ENCODE measurements at regions of chr12 and their contacts with region 1.

Region 1: DNA sequence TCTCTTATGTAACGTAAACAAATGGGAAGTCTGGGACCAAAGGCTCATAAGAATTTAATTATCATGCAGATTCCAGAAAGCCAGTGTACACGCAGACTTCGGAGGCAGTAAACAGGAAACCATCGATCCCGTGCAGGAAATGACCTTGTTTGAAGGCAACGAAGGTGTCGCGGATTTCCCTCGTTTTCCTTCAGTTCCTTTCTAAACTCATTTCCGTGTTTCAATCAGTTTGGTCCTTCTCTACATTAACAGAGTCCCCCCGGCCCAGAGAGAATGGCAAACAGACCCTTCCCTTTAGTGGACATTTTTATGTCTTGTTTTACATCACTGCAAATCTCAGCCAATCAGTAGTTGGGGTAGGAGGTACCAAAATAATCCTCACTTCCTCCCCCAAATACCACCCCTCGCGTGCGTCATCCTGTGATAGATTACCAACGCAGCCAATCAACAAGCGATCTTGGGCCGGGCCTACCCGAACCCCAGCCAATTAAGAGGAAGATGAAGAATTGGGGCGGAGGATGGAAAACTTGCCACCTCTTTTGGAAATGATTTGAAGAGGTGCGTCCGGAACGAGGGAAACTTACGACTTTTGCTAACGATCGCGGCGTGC is 6.1 kb upstream of the FOXJ2 start:
- DNase-seq: peak; percentile 98
- ATAC-seq: peak; percentile 97
- H3K4me3 Mint-ChIP-seq: peak overlapping the region; percentile 92
- H3K27ac Mint-ChIP-seq: peak overlapping the region; percentile 97
- H3K4me1 Mint-ChIP-seq: peaks cover 11% of the 10 kb centered on the region
- H3K27me3 Mint-ChIP-seq: no peaks in the 10 kb centered on the region

Region 2: GRCh38 chr12:6662906-6663742 is 1363.3 kb before region 1 on chr12 and contains the start of gene ING4:
- CTCF ChIA-PET with region 1: no interaction called
- POLR2A ChIA-PET with region 1: no interaction called
- intact Hi-C with region 1: loop called in 1 of 2 experiments (anchors 1 kb)
- DNase-seq: peak; percentile 98
- ATAC-seq: peak; percentile 98
- H3K4me3 Mint-ChIP-seq: peak within 1 kb of the TSS; percentile 84
- H3K27ac Mint-ChIP-seq: peak within 1 kb of the TSS; percentile 91
- H3K4me1 Mint-ChIP-seq: peaks cover 24% of the 10 kb centered on the region
- H3K27me3 Mint-ChIP-seq: no peaks in the 10 kb centered on the region
- total RNA-seq, gene ING4: 14.9 to 17.6 TPM

Region 3: DNA sequence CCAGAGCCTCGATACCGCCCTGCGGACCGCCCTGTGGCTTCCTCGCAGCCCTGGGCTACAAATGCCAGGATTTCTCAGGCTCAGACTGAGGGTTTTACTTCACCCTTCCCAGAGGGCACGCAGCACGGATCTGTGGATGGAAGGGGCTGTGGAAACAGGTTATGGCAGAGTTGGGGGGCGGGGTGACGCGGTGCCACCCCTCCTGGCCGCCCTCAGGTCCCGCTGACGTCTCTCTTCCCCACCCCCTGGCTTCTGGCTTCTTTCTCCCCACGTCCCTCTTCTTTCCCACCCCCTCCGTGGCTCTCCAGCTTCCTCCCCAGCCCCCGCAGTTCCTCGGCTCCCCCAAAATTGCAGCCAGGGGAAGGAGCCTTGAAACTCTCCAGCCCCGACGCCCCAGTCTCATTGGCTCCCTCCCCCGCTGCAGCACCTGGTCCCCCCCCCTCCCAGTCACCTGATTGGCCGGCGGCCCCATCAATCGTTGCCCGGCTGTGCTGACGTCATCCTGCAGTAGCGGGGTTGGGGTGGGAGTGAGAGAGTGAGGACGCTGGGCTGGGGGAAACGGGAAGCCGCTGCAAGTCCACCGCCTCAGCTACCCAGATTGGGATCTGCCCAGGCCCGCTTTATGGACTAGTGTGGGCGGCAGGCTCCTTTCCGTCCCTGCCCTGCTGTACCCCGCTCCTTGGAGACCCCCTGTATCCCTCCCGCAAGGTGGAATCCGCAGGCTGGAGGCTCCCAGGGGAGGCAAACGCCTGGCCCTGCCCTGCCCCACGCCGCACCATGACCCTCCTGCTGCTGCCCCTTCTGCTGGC is 896.3 kb before region 1 on chr12 and contains the start of gene CLSTN3:
- CTCF ChIA-PET with region 1: no interaction called
- POLR2A ChIA-PET with region 1: no interaction called
- intact Hi-C with region 1: loop called in 1 of 2 experiments (anchors 2 kb)
- DNase-seq: peak; percentile 93
- ATAC-seq: peak; percentile 89
- H3K4me3 Mint-ChIP-seq: peak within 1 kb of the TSS; percentile 80
- H3K27ac Mint-ChIP-seq: peak within 1 kb of the TSS; percentile 74
- H3K4me1 Mint-ChIP-seq: peaks cover 31% of the 10 kb centered on the region
- H3K27me3 Mint-ChIP-seq: no peaks in the 10 kb centered on the region
- total RNA-seq, gene CLSTN3: 28.2 to 37.9 TPM

Region 4: GRCh38 chr12:7512553-7512952 is 513.8 kb before region 1 on chr12:
- CTCF ChIA-PET with region 1: no interaction called
- POLR2A ChIA-PET with region 1: no interaction called
- intact Hi-C with region 1: no loop called
- DNase-seq: peak; percentile 5
- ATAC-seq: no peak
- H3K4me3 Mint-ChIP-seq: no peak overlapping the region
- H3K27ac Mint-ChIP-seq: no peak overlapping the region
- H3K4me1 Mint-ChIP-seq: no peaks in the 10 kb centered on the region
- H3K27me3 Mint-ChIP-seq: peaks cover 14% of the 10 kb centered on the region

Region 5: DNA sequence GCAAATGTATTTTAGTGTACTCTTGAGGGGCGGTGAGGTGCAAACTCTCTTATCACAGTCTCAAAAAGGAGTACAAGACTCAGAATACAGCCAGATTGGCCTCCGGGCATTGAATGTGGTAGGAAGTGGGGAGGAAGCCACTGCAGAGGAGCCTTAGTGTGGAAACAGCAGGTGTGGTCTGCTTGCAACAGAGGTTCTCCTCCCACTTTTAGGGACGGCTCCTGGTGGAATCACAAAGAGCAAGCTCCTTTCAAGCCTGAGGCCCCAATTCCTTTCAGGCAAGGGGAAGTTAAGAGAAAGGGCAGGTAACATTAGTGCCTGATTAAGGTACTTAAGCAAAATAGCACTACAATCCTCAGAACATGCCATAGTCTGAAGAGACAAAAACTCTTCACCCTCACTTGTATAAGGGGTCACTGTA is 66.7 kb before region 1 on chr12:
- CTCF ChIA-PET with region 1: interaction called, 7 read pairs
- POLR2A ChIA-PET with region 1: no interaction called
- intact Hi-C with region 1: loop called (anchors 1 to 2 kb)
- DNase-seq: peak; percentile 60
- ATAC-seq: peak; percentile 34
- H3K4me3 Mint-ChIP-seq: peak overlapping the region; percentile 86
- H3K27ac Mint-ChIP-seq: peak overlapping the region; percentile 94
- H3K4me1 Mint-ChIP-seq: peaks cover 30% of the 10 kb centered on the region
- H3K27me3 Mint-ChIP-seq: no peaks in the 10 kb centered on the region

Region 6: GRCh38 chr12:7970475-7971252 is 55.7 kb before region 1 on chr12:
- CTCF ChIA-PET with region 1: interaction called, 3 read pairs
- POLR2A ChIA-PET with region 1: interaction called, 7 read pairs
- intact Hi-C with region 1: loop called (anchors 1 to 2 kb)
- DNase-seq: peak; percentile 94
- ATAC-seq: peak; percentile 81
- H3K4me3 Mint-ChIP-seq: peak overlapping the region; percentile 80
- H3K27ac Mint-ChIP-seq: peak overlapping the region; percentile 99
- H3K4me1 Mint-ChIP-seq: peaks cover 31% of the 10 kb centered on the region
- H3K27me3 Mint-ChIP-seq: no peaks in the 10 kb centered on the region

Region 7: GRCh38 chr12:7989827-7990551 is 36.4 kb before region 1 on chr12:
- CTCF ChIA-PET with region 1: interaction called, 4 read pairs
- POLR2A ChIA-PET with region 1: no interaction called
- intact Hi-C with region 1: loop called in 1 of 2 experiments (anchors 1 kb)
- DNase-seq: peak; percentile 94
- ATAC-seq: peak; percentile 92
- H3K4me3 Mint-ChIP-seq: peak overlapping the region; percentile 62
- H3K27ac Mint-ChIP-seq: peak overlapping the region; percentile 90
- H3K4me1 Mint-ChIP-seq: peaks cover 42% of the 10 kb centered on the region
- H3K27me3 Mint-ChIP-seq: no peaks in the 10 kb centered on the region

Region 8: GRCh38 chr12:7995266-7995963 is 31.0 kb before region 1 on chr12:
- CTCF ChIA-PET with region 1: interaction called, 4 read pairs
- POLR2A ChIA-PET with region 1: no interaction called
- intact Hi-C with region 1: loop called in 1 of 2 experiments (anchors 1 kb)
- DNase-seq: peak; percentile 93
- ATAC-seq: peak; percentile 80
- H3K4me3 Mint-ChIP-seq: no peak overlapping the region
- H3K27ac Mint-ChIP-seq: no peak overlapping the region
- H3K4me1 Mint-ChIP-seq: peaks cover 23% of the 10 kb centered on the region
- H3K27me3 Mint-ChIP-seq: no peaks in the 10 kb centered on the region

Region 9: DNA sequence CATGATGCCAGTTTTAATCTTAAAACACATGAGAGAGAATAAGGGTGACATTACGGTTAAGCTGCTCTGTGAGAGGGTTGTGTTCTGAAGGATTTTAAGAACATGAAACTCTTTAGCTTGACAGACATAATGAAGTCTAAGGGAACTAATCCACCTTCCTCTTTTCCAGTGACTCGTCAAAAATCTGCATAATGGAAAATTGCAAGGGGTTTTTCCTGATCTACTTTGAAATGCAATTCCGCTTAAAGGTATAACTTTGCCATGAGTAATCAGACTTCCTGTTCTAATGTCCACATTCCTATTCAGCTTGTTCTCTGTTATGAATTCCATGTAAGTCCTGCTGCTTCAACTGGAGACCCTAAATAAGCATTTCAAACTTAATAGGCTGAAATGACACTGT is 130.4 kb after region 1 on chr12 and contains the start of gene ZNF705A:
- CTCF ChIA-PET with region 1: no interaction called
- POLR2A ChIA-PET with region 1: no interaction called
- intact Hi-C with region 1: no loop called
- DNase-seq: no peak
- ATAC-seq: no peak
- H3K4me3 Mint-ChIP-seq: no peak within 1 kb of the TSS
- H3K27ac Mint-ChIP-seq: no peak within 1 kb of the TSS
- H3K4me1 Mint-ChIP-seq: peaks cover 28% of the 10 kb centered on the region
- H3K27me3 Mint-ChIP-seq: peaks cover 3% of the 10 kb centered on the region
- total RNA-seq, gene ZNF705A: not detected

Measured in activated CD4-positive, alpha-beta T cell treated with anti-CD3 and anti-CD28 coated beads for 36 hours (primary cell).